ENCODE measurements at regions of chr11 and their contacts with region 1.

Region 1: DNA sequence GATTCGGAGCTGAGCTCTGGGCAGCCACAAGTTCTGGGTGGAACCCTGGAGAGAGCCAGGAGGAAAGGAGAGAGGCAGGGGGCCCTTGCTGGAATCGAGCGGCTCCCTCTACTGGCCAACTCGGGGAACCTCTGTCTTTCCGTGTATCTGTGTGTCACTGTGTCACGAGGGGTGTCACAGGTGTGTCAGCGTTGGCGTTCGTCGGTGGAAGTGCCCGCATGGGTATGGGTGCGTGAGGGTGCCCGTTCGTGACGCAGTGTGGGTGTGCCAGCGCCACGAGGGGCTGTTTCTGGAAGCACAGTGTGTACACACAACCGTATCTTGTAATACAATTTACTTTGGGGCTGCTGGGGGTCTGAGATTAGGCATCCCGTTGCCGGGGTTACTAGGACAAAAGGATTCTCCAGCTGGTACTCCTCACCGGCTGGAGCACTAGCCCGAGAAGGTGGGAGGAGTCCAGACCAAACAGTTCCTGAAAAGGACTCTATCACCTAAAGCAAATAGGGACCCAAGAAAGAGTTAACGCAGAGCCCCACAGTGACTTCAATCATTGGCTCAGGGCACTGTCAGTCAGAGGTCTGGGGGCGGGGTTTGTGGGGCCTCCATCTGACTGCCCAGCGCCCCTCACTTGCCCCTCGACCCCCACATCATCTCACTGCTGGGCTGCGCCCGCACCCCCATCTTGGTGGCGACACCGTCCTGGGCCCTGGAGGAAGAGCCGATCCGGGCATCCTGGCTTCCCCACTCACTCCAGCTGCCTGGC is 2.6 kb upstream of the BCL9L start:
- DNase-seq: peak; percentile 97
- H3K4me3 Mint-ChIP-seq: peak overlapping the region; percentile 97
- H3K27ac Mint-ChIP-seq: peak overlapping the region; percentile 98
- H3K4me1 Mint-ChIP-seq: peaks cover 51% of the 10 kb centered on the region
- H3K27me3 Mint-ChIP-seq: no peaks in the 10 kb centered on the region

Region 2: DNA sequence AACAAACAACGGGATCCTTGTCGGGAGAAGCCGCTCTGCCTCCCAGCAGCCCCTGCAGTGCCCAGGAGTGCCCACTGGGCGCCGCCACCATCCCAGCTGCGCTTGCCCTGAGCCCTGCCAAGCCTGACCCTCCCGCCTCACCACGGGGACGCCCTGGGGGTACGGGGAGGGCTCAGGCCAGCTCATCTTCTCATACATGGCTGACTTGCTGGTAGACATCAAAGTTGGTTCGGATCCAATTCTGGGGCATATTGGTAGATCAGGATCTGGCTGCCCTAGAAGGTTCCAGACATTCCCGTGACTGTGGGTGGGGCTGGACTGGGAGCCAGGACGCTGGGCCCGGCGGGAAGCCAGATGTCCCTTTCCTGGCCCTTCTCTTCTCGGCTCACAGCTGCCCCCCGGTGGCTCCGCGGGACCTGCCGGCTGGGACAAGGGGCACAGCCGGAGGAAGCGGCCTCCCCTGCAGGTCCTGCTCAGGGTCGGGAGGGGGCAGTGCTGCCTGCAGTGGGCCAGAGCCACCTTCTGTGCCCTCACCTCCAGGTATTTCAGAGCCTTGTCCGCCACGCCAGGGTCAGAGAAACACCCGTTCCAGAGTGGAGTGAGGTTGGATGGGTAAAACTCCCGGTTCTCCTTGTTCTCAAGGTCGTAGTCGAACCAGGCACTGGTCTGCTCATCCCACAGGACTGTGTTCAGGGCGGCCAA is 238.3 kb before region 1 on chr11:
- intact Hi-C with region 1: loop called (anchors 1 kb)
- DNase-seq: peak; percentile 94
- H3K4me3 Mint-ChIP-seq: peak overlapping the region; percentile 79
- H3K27ac Mint-ChIP-seq: peak overlapping the region; percentile 60
- H3K4me1 Mint-ChIP-seq: peaks cover 27% of the 10 kb centered on the region
- H3K27me3 Mint-ChIP-seq: peaks cover 12% of the 10 kb centered on the region

Region 3: GRCh38 chr11:118878163-118878563 is 50.1 kb before region 1 on chr11:
- intact Hi-C with region 1: loop called (anchors 5 kb)
- DNase-seq: peak; percentile 73
- H3K4me3 Mint-ChIP-seq: no peak overlapping the region
- H3K27ac Mint-ChIP-seq: peak overlapping the region; percentile 82
- H3K4me1 Mint-ChIP-seq: peaks cover 79% of the 10 kb centered on the region
- H3K27me3 Mint-ChIP-seq: no peaks in the 10 kb centered on the region

Region 4: DNA sequence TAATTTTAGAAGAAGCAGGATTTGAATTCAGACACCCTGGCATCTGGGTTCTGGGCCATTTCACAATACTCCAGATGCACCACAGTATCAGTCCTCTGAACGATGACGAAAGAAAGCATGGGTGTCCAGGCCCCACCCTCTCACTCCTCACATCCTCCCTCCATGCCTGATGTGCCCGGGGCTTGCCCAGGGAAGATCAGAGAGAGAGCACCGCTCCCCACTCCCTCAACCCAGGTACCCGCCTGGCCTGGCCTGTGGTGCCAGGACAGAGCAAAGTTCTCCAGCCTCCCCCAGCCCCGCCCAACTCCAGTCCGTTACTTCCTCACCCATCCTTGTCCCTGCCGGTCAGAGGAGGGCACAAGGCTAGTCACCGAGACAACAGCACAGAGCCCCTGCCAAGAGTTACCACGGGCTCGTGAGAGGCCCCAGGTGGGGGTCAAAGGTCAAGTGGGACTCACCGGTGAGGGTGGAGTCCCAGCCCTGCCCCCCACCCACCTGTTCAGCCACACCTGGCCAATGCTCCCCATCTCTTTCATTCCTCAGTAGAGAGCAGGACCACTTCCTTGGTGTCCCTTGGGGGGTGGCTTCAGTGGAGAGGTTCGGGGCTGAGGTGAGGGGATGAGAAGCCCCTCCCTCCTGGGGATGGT is 10.7 kb before region 1 on chr11:
- intact Hi-C with region 1: loop called (anchors 1 kb)
- DNase-seq: peak; percentile 86
- H3K4me3 Mint-ChIP-seq: peak overlapping the region; percentile 90
- H3K27ac Mint-ChIP-seq: peak overlapping the region; percentile 97
- H3K4me1 Mint-ChIP-seq: peaks cover 82% of the 10 kb centered on the region
- H3K27me3 Mint-ChIP-seq: no peaks in the 10 kb centered on the region

Region 5: DNA sequence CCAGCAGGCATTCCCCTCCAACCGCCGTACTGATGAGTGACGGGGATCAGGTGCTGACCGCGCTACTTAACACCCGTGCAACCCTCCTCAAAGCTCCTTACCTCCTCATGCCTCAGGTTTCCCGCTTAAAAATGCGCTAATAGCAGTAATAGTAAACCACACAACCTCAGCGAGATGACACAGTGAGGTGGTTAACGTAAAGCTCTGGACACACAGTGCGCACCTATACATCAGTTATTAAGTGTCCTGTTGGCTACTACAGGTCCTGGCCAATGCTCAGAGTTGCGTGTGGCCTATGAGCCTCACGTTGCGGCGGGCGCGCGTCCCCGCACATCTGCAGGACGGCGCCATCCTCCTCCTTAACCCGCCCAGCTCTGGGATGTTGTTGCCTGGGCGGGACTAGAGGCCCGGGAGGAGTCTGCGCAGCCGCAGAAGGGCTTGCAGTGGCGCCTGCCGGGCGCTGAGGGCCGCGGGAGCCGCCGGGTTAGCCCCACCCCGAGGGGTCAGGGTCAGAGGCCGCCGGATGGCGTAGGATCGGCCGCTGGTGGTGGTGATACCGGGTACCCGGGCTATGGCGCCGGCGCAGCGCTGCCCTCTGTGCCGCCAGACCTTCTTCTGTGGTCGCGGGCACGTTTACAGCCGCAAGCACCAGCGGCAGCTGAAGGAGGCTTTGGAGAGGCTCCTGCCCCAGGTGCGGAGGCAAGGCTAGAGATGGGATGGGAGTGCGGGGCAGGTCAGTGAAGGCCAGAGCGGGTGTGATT is 69.5 kb after region 1 on chr11 and contains the start of gene CENATAC:
- intact Hi-C with region 1: loop called (anchors 5 kb)
- DNase-seq: peak; percentile 99
- H3K4me3 Mint-ChIP-seq: peak within 1 kb of the TSS; percentile 90
- H3K27ac Mint-ChIP-seq: peak within 1 kb of the TSS; percentile 94
- H3K4me1 Mint-ChIP-seq: peaks cover 24% of the 10 kb centered on the region
- H3K27me3 Mint-ChIP-seq: no peaks in the 10 kb centered on the region
- total RNA-seq, gene CENATAC: 46.3 and 47.1 TPM in 2 replicates

Region 6: DNA sequence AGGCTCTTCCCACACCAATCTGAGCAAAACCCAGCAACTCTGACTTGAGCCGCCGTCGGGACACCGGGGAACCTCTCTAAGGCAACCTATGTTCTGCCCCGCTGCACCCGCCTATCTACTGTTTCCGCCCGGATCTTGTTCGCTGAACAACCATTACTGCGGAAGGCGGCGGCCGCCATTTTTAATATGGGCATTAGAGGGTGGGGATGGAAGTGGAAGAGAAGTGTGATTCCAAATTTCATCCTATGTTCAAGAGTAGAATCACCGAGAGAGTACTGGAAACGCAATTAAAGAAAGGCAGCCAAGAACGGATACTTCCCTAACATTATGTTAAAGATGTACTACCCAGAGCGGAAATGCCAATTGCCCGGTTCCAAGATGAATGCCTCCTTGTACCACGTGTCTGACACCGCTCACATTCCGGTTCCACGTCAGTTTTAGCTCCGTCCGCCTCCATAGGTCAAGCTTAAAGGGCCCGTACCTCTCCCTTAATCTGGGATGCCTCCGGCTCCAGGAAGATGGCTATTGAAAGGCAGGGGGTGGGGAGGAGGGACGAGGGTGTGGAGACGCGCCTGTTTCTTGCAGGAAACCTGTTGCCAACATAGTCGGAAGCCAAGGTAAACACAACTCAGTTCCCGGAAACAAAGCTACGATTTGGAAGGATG is 173.6 kb after region 1 on chr11 and contains the start of gene DPAGT1:
- intact Hi-C with region 1: loop called (anchors 5 kb)
- DNase-seq: peak; percentile 96
- H3K4me3 Mint-ChIP-seq: peak within 1 kb of the TSS; percentile 92
- H3K27ac Mint-ChIP-seq: peak within 1 kb of the TSS; percentile 99
- H3K4me1 Mint-ChIP-seq: peaks cover 40% of the 10 kb centered on the region
- H3K27me3 Mint-ChIP-seq: no peaks in the 10 kb centered on the region
- total RNA-seq, gene DPAGT1: 76.1 and 79.4 TPM in 2 replicates

Region 7: GRCh38 chr11:119474682-119475596 is 546.6 kb after region 1 on chr11:
- intact Hi-C with region 1: no loop called
- DNase-seq: peak; percentile 85
- H3K4me3 Mint-ChIP-seq: no peak overlapping the region
- H3K27ac Mint-ChIP-seq: no peak overlapping the region
- H3K4me1 Mint-ChIP-seq: no peaks in the 10 kb centered on the region
- H3K27me3 Mint-ChIP-seq: peaks cover 5% of the 10 kb centered on the region

Measured in activated CD4-positive, alpha-beta T cell treated with anti-CD3 and anti-CD28 coated beads, Interleukin-2, amount 10 ng/mL, durations not matched to agents 24 days and 14 days (primary cell).